Cardiac septum (tissue), 1 donor: ENCODE measurements at regions of chr14 and their contacts with region 1.

Region 1: DNA sequence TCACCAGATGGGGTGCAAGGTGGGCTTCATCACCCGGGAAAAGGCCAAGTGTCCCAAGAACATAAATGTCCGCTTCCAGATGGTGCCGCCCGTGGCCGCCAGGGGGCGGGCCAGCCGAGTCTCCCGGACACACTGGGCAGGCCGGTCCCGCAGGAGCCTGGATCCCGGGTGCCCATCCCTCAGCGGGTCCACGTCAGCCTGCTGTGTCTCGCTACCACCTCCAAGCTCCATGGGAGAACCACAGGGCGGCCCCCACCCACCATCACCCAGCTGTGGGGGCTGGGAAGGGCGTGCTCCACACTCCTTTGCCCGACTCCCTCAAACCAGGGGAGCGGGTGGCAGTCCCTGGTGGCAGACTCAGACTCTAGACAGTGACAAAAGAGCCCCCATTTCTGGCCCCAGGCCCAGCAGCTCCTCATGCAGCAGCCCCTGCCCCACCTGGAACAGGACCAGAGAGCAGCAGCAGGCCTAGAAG is 22.0 kb upstream of the NUDT14 start:
- DNase-seq: no peak

Region 2: DNA sequence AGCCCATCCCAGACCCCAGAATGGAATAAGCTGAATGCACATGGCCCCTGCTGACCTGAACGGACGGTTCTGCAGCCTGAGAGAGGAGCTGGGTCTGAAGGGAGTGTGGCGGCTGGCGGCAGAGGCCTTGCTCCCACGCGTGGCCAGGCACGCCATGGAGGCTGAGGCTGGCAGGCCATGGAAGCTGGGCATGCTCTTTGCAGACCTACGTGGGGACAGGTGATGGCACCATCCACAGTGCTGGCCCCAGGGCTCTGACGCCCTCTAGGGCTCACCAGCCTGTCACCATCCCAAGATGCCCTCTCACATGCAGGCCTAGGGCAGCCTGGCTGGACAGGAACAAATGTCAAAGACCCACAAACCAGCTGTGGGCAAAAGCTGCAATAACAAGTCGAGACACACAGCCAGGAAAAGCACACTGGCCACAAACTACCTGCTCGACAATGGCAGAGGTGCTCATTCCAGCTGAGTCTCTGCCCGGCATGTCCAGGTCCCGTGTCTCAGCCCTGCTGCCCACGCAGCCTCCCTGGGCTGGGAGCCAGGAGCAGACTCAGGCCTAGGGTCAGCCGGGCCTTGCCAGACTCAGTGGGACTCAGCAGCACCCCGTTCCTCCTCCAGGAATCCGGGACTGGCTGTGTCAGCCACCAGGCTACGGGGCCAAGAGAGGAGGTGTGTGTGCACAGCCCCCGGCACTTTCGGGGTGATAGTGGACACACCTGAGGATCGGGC is 64.9 kb after region 1 on chr14:
- intact Hi-C with region 1: loop called (anchors 5 kb)
- DNase-seq: no peak

Region 3: DNA sequence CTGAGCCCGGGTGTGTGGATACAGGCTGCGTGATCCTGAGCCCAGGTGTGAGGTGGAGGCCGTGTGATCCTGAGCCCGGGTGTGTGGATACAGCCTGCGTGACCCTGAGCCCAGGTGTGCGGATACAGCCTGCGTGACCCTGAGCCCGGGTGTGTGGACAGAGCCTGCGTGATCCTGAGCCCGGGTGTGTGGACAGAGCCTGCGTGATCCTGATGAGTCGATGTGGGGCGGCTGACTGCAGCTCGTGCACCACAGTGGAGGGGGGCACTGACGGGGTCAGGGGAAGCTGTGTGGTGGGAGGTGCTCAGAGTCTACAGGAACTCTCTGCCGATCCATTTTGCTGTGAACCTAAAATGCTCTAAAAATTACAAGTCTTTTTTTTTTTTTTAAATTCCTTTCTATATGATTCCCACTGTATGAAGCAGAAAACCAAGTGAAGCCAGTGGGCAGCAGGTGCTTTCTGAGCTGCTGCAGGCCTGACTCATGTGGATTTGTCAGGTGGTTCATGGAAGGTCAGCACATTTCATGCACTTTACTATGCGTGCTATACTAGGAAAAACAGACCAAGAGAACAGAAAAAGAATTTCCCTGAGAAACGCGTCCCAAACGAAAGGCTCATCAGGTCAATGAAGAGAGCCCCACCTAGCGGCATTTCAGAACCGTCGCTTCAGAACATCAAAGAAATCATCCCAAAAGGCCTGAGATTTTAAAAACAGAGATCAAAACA is 78.4 kb after region 1 on chr14:
- intact Hi-C with region 1: loop called (anchors 5 kb)
- DNase-seq: no peak

Region 4: DNA sequence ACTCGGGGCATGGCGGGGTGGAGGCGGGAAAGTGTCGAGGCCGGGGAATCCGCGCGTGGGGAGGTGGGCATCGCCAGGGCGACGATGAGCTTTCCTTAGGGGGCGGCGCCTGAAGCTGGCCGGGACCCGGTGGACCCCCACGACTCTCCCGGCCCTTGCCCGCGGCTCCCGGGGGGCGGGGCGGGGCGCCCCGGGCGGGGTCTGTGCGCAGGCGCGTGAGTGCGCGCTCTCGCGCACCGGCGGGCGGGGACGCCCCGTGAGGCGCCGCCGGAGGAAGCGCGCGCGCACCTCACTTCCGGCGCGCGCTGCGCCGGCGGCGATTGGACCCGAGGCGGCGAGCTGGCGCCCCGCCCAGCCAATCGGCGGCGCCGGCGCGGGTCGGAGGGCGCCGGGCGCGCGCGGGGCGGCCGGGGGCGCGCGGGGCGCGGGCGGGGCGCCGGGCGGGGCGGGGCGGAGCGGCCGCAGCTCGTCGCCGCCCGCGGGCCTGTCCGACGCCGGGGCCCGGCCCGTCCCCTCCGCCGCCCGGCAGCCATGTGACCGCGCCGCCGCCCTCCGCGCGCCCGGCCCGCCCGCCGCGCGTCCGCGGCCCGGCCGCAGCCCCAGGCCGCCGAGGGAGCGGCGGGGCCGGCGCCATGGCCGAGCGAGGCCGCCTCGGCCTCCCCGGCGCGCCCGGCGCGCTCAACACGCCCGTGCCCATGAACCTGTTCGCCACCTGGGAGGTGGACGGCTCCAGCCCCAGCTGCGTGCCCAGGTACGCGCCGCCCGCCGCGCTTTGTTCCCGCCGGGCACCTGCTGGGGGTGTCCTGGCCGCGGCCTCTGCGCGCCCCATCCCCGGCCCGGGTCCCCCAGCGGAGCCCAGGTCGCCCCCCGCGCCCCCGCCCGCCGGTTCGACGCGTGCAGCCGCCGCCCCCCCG is 111.5 kb after region 1 on chr14 and contains the start of gene PACS2:
- intact Hi-C with region 1: no loop called
- DNase-seq: no peak
- total RNA-seq, gene PACS2: 55.1 TPM